ENCODE measurements at regions of chr10 and their contacts with region 1.

Region 1: GRCh38 chr10:24503461-24504320 is 220.0 kb downstream of the ARHGAP21 start:
- DNase-seq: no peak
- ATAC-seq: no peak
- H3K4me3 ChIP-seq: no peak overlapping the region
- H3K27ac ChIP-seq: no peak overlapping the region
- H3K4me1 ChIP-seq: no peaks in the 10 kb centered on the region
- H3K27me3 ChIP-seq: no peaks in the 10 kb centered on the region

Region 2: DNA sequence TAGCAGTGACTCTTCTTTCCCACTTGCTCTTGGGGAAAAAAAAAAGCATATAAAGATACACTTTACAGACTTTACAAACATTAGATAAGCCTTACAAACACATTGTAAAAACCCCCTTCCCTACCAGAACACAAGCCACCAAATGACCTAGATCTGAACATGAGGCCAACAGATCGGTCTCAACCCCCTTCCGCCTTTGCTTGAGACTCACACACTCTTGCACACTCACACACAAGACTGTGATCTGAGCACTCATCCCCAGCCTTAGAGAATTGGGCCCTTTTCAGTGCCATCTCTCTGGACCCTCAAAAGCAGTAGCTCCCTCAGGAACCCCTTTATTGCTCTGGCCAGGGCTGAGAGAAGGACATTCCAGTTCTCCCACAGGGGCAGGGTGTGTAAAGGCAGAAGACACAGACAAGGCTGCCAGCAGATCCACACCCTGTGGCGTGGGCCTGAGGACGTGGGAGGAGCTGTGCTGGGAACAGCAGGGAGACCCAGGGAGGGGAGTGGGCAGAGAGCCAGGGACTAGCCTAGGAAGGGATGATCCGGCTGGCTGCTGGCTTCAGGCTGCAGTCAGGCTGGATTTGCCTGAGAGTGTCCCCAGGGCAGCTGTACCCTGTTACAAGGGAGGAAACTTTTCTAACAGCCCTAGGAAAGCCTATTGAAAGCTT is 88.1 kb before region 1 on chr10:
- intact Hi-C with region 1: loop called in 1 of 2 experiments (anchors 10 kb)
- DNase-seq: peak; percentile 70 to 84
- ATAC-seq: peak; percentile 57
- H3K4me3 ChIP-seq: no peak overlapping the region
- H3K27ac ChIP-seq: no peak overlapping the region
- H3K4me1 ChIP-seq: no peaks in the 10 kb centered on the region
- H3K27me3 ChIP-seq: no peaks in the 10 kb centered on the region

Region 3: DNA sequence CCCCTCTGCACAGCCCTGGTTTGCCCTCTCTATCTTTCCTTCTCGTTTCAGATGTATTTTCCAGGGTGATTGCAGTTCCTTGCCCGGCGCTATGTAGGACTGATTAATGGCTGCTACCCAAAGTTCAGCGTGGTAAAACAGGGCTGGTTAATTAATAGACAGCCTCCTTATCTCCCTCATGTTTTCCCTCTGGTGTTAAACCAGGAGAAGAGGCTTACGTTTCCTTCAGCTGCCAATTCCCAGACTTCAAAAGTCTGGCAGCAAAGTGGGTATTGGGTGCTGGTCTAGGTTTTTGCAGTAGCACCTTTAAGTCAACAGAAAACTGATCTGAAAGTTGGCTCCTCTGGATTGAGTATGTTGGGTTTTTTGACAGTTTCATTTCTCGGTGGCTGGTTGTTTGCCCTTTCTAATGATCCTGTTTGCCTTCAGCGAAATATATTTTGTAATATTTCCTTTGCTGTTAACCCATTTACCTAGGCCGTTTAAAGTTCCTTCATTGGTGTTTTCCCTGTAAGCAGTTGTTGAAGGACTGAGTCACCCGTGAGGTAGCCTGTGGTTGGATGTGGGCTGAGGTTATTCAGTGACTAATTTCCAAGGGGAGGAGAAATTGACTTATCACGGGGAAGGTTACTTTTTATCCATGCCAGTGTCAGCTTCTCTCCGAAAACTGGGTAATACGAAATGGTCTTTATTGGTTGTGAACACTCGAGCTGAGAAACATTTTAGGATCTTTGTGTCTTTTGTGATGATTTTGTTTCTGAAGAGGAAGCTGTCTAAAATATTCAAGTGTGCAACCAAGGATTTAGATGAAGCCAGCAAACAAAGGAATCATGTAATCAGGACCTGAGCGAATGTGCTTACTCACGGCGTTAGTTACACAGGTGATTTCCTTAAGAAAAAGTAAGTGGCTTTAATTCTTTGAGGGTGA is 37.5 kb before region 1 on chr10:
- intact Hi-C with region 1: no loop called
- DNase-seq: no peak
- ATAC-seq: peak; percentile 40
- H3K4me3 ChIP-seq: no peak overlapping the region
- H3K27ac ChIP-seq: peak overlapping the region in 1 of 2 donors; percentile 11
- H3K4me1 ChIP-seq: peaks cover 3 to 4% of the 10 kb centered on the region in 2 donors
- H3K27me3 ChIP-seq: no peaks in the 10 kb centered on the region